ENCODE measurements at regions of chr11 and their contacts with region 1.

Region 1: GRCh38 chr11:120344302-120345004 is 8.2 kb downstream of the ARHGEF12 start:
- DNase-seq: no peak
- H3K4me3 ChIP-seq: no peak overlapping the region
- H3K27ac ChIP-seq: no peak overlapping the region
- H3K27me3 ChIP-seq: no peaks in the 10 kb centered on the region
- CTCF ChIP-seq: no peak

Region 2: GRCh38 chr11:120303004-120303637 is 41.3 kb before region 1 on chr11:
- CTCF ChIA-PET with region 1: no interaction called
- POLR2A ChIA-PET with region 1: no interaction called
- DNase-seq: peak; percentile 55
- H3K4me3 ChIP-seq: no peak overlapping the region
- H3K27ac ChIP-seq: no peak overlapping the region
- H3K27me3 ChIP-seq: peaks cover 21% of the 10 kb centered on the region
- CTCF ChIP-seq: peak; percentile 99

Region 3: GRCh38 chr11:120386774-120387371 is 42.4 kb after region 1 on chr11:
- CTCF ChIA-PET with region 1: interaction called, 10 read pairs
- POLR2A ChIA-PET with region 1: no interaction called
- DNase-seq: no peak
- H3K4me3 ChIP-seq: no peak overlapping the region
- H3K27ac ChIP-seq: no peak overlapping the region
- H3K27me3 ChIP-seq: no peaks in the 10 kb centered on the region
- CTCF ChIP-seq: no peak

Measured in AG04450 (cell line).